Vagina (tissue), 2 donors: ENCODE measurements at regions of chr17 and their contacts with region 1.

Region 1: GRCh38 chr17:57987580-57988421 is at the start of gene VEZF1:
- DNase-seq: no peak
- H3K4me3 ChIP-seq: peak within 1 kb of the TSS; percentile 79 to 95
- H3K27ac ChIP-seq: peak within 1 kb of the TSS; percentile 93
- H3K4me1 ChIP-seq: peaks cover 53% of the 10 kb centered on the region
- H3K27me3 ChIP-seq: no peaks in the 10 kb centered on the region
- CTCF ChIP-seq: no peak
- POLR2A ChIP-seq: peak in 1 of 2 donors; percentile 36
- total RNA-seq, gene VEZF1: 86.2 TPM

Region 2: GRCh38 chr17:56367366-56367765 is 1620.4 kb before region 1 on chr17:
- intact Hi-C with region 1: no loop called
- DNase-seq: no peak
- H3K4me3 ChIP-seq: no peak overlapping the region
- H3K27ac ChIP-seq: no peak overlapping the region
- H3K4me1 ChIP-seq: no peaks in the 10 kb centered on the region
- H3K27me3 ChIP-seq: no peaks in the 10 kb centered on the region
- CTCF ChIP-seq: no peak
- POLR2A ChIP-seq: no peak

Region 3: GRCh38 chr17:57874434-57875308 is 113.1 kb before region 1 on chr17:
- intact Hi-C with region 1: loop called (anchors 5 kb)
- DNase-seq: no peak
- H3K4me3 ChIP-seq: peak overlapping the region; percentile 1 to 8
- H3K27ac ChIP-seq: peak overlapping the region; percentile 82
- H3K4me1 ChIP-seq: peaks cover 79% of the 10 kb centered on the region
- H3K27me3 ChIP-seq: no peaks in the 10 kb centered on the region
- CTCF ChIP-seq: no peak
- POLR2A ChIP-seq: no peak

Region 4: DNA sequence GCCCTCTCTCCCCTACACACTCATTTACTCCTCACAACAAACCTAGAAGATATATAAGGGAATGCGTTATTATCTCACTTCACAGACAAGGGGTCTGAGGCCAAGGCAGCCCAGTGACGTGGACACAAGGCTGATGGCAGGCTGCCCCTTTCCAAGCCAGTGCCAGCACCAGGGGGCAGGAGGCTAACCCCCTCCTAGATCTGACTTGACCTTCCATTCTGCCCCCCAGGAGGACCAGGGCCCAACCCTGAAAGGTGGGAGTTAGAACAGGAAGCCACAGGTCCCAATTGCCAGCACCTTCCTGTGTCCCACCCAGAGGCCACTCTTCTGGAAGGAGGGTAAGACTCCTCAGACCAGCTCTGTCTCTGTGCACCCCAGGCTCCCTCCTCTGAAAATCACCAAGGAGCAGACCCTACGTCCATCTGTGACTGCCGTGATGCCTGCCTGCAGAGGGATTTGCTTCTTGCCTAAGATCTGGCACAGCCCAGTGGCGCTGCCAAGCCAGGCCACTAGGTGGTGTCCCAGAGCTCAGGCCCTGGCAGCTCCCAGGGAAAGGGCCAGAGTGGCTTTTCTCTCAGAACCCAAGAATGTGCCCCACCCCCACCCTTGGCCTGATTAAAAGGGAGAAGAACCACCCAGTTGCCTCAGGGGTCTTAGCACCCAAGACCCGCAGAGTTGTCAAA is 95.5 kb before region 1 on chr17:
- intact Hi-C with region 1: loop called (anchors 5 kb)
- DNase-seq: no peak
- H3K4me3 ChIP-seq: no peak overlapping the region
- H3K27ac ChIP-seq: peak overlapping the region; percentile 93
- H3K4me1 ChIP-seq: peaks cover 81% of the 10 kb centered on the region
- H3K27me3 ChIP-seq: no peaks in the 10 kb centered on the region
- CTCF ChIP-seq: peak; percentile 82 to 96 (median 86)
- POLR2A ChIP-seq: no peak

Region 5: GRCh38 chr17:57954395-57955182 is 33.2 kb before region 1 on chr17:
- intact Hi-C with region 1: loop called (anchors 5 kb)
- DNase-seq: no peak
- H3K4me3 ChIP-seq: peak overlapping the region; percentile 67 to 82
- H3K27ac ChIP-seq: peak overlapping the region; percentile 99
- H3K4me1 ChIP-seq: peaks cover 63% of the 10 kb centered on the region
- H3K27me3 ChIP-seq: no peaks in the 10 kb centered on the region
- CTCF ChIP-seq: no peak
- POLR2A ChIP-seq: peak in 1 of 2 donors; percentile 54

Region 6: DNA sequence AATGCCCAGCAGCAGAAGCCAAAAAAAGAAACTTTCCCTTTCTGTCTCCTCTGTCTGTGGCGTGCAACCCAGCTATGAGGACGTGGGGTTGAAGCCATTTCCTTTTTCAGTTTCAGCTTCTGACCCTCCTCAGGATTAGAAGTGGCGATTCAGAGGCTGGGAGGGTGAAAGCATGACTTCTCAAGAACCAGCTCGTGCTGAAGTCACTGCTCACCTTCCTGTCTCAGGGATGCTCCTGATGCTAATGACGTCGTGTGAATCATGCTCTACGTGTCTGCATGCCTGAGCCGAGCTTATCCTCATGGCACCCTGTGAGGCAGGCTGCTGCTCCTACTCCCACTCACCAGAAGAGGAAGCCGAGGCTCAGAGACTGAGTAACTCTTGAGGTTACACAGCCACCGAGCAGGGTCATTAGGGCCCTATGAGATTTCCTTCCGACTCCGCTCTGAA is 244.9 kb after region 1 on chr17:
- intact Hi-C with region 1: no loop called
- DNase-seq: no peak
- H3K4me3 ChIP-seq: no peak overlapping the region
- H3K27ac ChIP-seq: no peak overlapping the region
- H3K4me1 ChIP-seq: no peaks in the 10 kb centered on the region
- H3K27me3 ChIP-seq: no peaks in the 10 kb centered on the region
- CTCF ChIP-seq: no peak
- POLR2A ChIP-seq: no peak